ENCODE measurements at regions of chr2 and their contacts with region 1.

Region 1: GRCh38 chr2:68909793-68910674 is 38.8 kb upstream of the BMP10 start:
- DNase-seq: peak; percentile 87
- H3K4me3 ChIP-seq: no peak overlapping the region
- H3K27ac ChIP-seq: no peak overlapping the region
- H3K4me1 ChIP-seq: peaks cover 36% of the 10 kb centered on the region
- CTCF ChIP-seq: peak; percentile 90

Region 2: GRCh38 chr2:68362069-68362468 is 548.0 kb before region 1 on chr2:
- CTCF ChIA-PET with region 1: no interaction called
- POLR2A ChIA-PET with region 1: no interaction called
- intact Hi-C with region 1: loop called (anchors 10 kb)
- DNase-seq: peak; percentile 94
- H3K4me3 ChIP-seq: peak overlapping the region; percentile 49
- H3K27ac ChIP-seq: peak overlapping the region; percentile 72
- H3K4me1 ChIP-seq: peaks cover 57% of the 10 kb centered on the region
- CTCF ChIP-seq: peak; percentile 92

Region 3: GRCh38 chr2:68653538-68653982 is 256.5 kb before region 1 on chr2:
- CTCF ChIA-PET with region 1: no interaction called
- POLR2A ChIA-PET with region 1: no interaction called
- intact Hi-C with region 1: no loop called
- DNase-seq: no peak
- H3K4me3 ChIP-seq: no peak overlapping the region
- H3K27ac ChIP-seq: no peak overlapping the region
- H3K4me1 ChIP-seq: no peaks in the 10 kb centered on the region
- CTCF ChIP-seq: no peak

Region 4: GRCh38 chr2:68709421-68709911 is 200.6 kb before region 1 on chr2:
- CTCF ChIA-PET with region 1: interaction called, 5 read pairs
- POLR2A ChIA-PET with region 1: interaction called, 15 read pairs
- intact Hi-C with region 1: loop called (anchors 1 kb)
- DNase-seq: peak; percentile 73
- H3K4me3 ChIP-seq: no peak overlapping the region
- H3K27ac ChIP-seq: no peak overlapping the region
- H3K4me1 ChIP-seq: peaks cover 21% of the 10 kb centered on the region
- CTCF ChIP-seq: peak; percentile 98

Region 5: GRCh38 chr2:68726608-68727367 is 183.2 kb before region 1 on chr2:
- CTCF ChIA-PET with region 1: interaction called, 7 read pairs
- POLR2A ChIA-PET with region 1: interaction called, 10 read pairs
- intact Hi-C with region 1: no loop called
- DNase-seq: peak; percentile 94
- H3K4me3 ChIP-seq: peak overlapping the region; percentile 39
- H3K27ac ChIP-seq: peak overlapping the region; percentile 66
- H3K4me1 ChIP-seq: peaks cover 68% of the 10 kb centered on the region
- CTCF ChIP-seq: no peak

Region 6: DNA sequence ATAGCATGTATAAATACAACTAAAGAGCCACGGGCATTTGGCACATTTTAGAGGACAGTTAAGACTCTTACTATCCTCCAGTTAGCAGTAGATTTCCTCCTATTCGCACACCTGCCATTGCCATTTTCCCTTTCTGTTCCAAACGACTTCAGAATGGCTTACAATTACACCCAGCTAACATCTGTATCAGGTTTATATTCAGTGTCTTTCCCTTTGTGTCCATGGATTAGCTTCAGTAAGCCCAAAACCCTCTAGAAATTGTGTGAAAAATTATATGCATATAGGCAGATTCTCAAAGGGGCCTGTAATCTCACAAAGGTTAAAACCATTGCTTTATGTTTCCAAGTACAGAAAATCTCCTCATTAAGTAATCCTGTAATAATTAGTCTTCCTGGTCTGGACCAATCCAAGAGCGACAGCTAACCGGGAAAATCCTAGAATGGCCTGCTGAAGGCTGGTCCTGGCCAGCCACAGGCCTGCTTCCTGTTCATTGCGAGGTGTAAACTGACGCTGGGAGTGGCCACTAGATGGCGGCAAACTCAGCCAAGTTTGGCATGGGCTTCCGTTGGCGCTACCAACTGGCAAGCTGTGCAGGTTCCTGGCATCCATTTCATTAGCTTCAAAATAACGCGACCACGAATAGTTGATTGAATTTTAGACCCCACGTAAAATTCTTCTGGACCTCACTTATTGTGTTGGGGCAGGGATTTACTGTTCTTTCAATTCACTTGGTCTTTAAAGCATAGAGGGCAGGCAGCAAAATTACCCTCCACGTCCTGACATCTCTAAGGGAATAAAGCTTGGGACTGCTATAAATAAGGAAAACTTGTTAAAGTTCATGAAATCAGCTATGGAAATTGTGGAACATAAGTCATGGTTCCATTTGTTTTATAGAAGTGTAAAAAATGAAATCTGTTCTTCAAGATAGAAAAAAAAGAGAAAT is 158.4 kb before region 1 on chr2:
- CTCF ChIA-PET with region 1: interaction called, 5 read pairs
- POLR2A ChIA-PET with region 1: interaction called, 18 read pairs
- intact Hi-C with region 1: loop called (anchors 1 kb)
- DNase-seq: peak; percentile 93
- H3K4me3 ChIP-seq: no peak overlapping the region
- H3K27ac ChIP-seq: peak overlapping the region; percentile 3
- H3K4me1 ChIP-seq: peaks cover 43% of the 10 kb centered on the region
- CTCF ChIP-seq: peak; percentile 98

Region 7: GRCh38 chr2:68774569-68775271 is 135.3 kb before region 1 on chr2:
- CTCF ChIA-PET with region 1: interaction called, 3 read pairs
- POLR2A ChIA-PET with region 1: interaction called, 10 read pairs
- intact Hi-C with region 1: loop called (anchors 5 kb)
- DNase-seq: peak; percentile 87
- H3K4me3 ChIP-seq: peak overlapping the region; percentile 69
- H3K27ac ChIP-seq: peak overlapping the region; percentile 54
- H3K4me1 ChIP-seq: peaks cover 81% of the 10 kb centered on the region
- CTCF ChIP-seq: no peak

Region 8: DNA sequence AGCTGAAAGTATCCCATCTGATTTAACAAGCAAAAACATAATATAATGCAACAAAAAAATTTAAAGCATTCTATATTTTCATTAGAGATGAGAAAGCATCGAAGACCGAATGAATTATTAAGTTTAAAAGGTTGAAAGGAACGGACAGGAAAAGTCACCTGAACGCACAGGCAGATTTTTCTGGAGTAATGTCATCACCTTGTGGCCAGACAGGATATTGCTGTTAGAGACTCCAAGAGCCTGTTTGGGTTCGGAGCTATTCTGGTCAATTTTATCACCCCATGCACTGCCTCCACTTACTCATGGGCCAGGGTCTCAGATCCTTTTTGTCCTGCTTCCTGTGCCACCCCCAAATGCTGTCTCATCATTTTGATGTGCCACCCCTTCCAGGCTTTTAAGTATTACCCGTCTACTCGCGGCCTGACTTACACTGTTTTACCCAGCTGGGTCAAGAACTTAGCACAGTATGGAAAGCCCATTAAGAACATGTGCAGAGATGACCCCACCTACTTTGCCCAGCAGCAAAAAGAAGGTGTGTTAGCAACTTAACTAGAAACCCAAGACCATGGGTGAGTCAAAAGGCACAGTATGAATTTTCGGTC is 15.4 kb after region 1 on chr2:
- CTCF ChIA-PET with region 1: interaction called, 11 read pairs
- POLR2A ChIA-PET with region 1: interaction called, 6 read pairs
- intact Hi-C with region 1: no loop called
- DNase-seq: peak; percentile 79
- H3K4me3 ChIP-seq: no peak overlapping the region
- H3K27ac ChIP-seq: no peak overlapping the region
- H3K4me1 ChIP-seq: peaks cover 4% of the 10 kb centered on the region
- CTCF ChIP-seq: peak; percentile 99